ENCODE measurements at regions of chr11 and their contacts with region 1.

Region 1: DNA sequence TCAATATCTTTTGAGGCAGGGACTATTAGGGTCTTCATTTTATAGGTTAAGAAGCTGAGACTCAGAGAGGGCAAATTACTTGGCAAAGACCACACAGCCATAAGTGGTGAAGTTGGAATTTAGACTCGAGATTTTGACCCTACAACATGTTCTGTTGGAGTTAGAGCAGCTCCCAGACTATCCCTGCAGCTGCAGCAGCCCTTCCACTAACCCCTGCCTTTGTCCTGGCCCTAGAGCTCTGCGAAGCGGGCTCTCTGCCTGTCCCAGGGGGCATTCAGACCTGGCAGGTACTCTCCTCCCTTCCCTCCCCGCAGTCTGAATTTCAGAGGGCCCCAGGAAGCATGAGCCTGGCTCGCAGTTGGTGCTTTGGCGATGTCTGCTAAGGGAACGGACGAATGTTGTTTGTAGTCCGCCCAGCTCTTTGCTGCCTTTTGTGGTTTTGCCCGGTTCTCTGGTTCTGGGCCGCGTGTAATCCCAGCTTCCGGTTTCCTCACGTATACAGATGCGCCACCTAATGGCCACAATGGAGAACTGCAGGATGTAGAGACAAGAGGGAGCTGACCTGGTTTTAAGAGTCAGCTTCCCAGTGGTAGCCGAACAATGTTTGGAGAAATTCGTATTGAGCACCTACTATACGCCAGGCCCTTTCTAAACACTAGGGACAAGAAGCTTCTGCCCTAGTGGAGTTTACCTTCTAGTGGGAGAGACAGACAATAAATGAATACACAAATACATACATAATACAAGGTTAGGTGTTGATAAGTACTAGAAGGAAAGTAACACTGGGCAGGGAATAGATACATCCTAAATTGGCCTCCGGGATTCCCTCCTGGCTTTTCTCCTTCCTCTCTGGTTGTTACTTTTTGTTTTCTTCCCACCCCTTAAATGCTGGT is 125.2 kb downstream of the ST3GAL4 start:
- DNase-seq: peak; percentile 29 to 87 (median 69)
- ATAC-seq: peak; percentile 95
- H3K4me3 ChIP-seq: peak overlapping the region; percentile 36 to 44
- H3K4me3 Mint-ChIP-seq: peak overlapping the region; percentile 71
- H3K27ac ChIP-seq: peak overlapping the region in 1 of 2 experiments; percentile 49
- H3K27ac Mint-ChIP-seq: no peak overlapping the region
- H3K4me1 ChIP-seq: peaks cover 6% of the 10 kb centered on the region
- H3K4me1 Mint-ChIP-seq: peaks cover 18% of the 10 kb centered on the region
- H3K27me3 ChIP-seq: no peaks in the 10 kb centered on the region
- H3K27me3 Mint-ChIP-seq: no peaks in the 10 kb centered on the region
- CTCF ChIP-seq: peak; percentile 94

Region 2: DNA sequence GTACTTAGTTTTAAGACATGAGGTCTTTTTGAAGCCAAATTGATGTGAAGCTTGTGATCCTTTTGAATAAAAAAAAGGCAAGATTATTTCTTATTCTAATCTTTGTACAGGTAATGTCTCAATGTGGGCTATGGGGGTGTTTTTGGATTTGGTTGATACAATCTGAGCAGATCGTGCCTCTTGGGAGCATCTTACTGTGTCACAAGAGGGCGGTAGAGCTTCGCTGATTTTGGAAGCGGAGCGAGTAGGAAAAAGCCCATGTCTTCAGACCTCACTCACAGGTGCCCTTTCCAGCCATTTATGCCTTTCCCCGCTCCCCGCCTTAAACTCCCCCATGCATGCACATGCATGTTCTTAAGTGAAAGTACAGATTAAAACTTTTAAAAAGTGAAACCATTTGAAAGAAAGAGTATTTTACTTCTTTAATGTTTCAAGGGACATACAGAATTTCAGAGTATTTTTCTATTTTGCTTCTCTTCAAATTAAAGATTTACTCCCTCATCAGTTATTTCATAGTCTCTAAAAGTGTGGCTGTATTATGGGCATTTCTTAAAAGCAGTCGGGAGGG is 557.6 kb before region 1 on chr11:
- CTCF ChIA-PET with region 1: interaction called, 3 read pairs
- POLR2A ChIA-PET with region 1: no interaction called
- intact Hi-C with region 1: loop called (anchors 1 kb)
- DNase-seq: peak in 8 of 9 experiments; percentile 29 to 72 (median 55)
- ATAC-seq: peak; percentile 52
- H3K4me3 ChIP-seq: no peak overlapping the region
- H3K4me3 Mint-ChIP-seq: no peak overlapping the region
- H3K27ac ChIP-seq: no peak overlapping the region
- H3K27ac Mint-ChIP-seq: no peak overlapping the region
- H3K4me1 ChIP-seq: no peaks in the 10 kb centered on the region
- H3K4me1 Mint-ChIP-seq: no peaks in the 10 kb centered on the region
- H3K27me3 ChIP-seq: no peaks in the 10 kb centered on the region
- H3K27me3 Mint-ChIP-seq: peaks cover 32% of the 10 kb centered on the region
- CTCF ChIP-seq: peak; percentile 60

Region 3: DNA sequence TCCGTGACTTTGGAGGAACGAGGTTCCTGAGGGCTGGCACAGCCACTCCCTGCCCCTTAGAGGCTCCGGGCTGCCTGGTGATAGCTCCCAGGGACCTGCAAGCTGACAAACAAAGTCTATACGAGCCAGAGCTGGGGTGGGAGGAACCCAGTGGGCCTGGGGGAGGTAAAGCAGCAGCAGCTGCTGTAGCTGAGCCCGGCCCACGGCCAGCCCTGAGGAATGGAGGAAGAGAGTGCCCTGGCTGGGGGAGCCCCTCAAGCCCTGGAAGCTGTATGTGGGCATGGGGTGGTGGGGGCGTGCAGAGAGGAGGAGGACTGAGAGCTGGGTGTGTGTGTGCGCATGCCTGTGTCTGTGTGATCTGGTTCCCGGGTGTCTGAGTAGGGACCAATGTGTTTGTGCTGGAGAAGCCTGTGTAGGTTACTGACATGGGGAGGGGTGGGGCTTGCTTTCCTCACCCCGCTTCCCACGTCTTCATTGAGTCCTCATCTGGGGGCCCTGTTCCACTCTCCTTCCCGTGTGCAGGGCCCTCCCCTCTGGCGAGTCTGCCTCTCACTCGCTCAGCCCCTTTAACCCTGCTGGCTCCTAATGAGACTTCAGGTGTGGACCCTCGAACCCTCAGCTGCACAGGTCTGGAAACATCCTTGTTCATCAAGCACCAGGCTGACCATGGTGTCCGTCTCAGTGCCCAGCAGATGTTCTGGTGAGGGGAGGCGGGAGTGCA is 114.4 kb before region 1 on chr11:
- CTCF ChIA-PET with region 1: no interaction called
- POLR2A ChIA-PET with region 1: no interaction called
- intact Hi-C with region 1: no loop called
- DNase-seq: no peak
- ATAC-seq: no peak
- H3K4me3 ChIP-seq: no peak overlapping the region
- H3K4me3 Mint-ChIP-seq: no peak overlapping the region
- H3K27ac ChIP-seq: no peak overlapping the region
- H3K27ac Mint-ChIP-seq: no peak overlapping the region
- H3K4me1 ChIP-seq: no peaks in the 10 kb centered on the region
- H3K4me1 Mint-ChIP-seq: peaks cover 3% of the 10 kb centered on the region
- H3K27me3 ChIP-seq: no peaks in the 10 kb centered on the region
- H3K27me3 Mint-ChIP-seq: no peaks in the 10 kb centered on the region
- CTCF ChIP-seq: no peak

Region 4: GRCh38 chr11:126416542-126417090 is 64.0 kb before region 1 on chr11:
- CTCF ChIA-PET with region 1: interaction called, 13 read pairs
- POLR2A ChIA-PET with region 1: no interaction called
- intact Hi-C with region 1: loop called in 1 of 2 experiments (anchors 10 kb)
- DNase-seq: peak; percentile 20 to 82 (median 67)
- ATAC-seq: peak; percentile 98
- H3K4me3 ChIP-seq: peak overlapping the region; percentile 40 to 49
- H3K4me3 Mint-ChIP-seq: peak overlapping the region; percentile 71
- H3K27ac ChIP-seq: no peak overlapping the region
- H3K27ac Mint-ChIP-seq: no peak overlapping the region
- H3K4me1 ChIP-seq: peaks cover 7% of the 10 kb centered on the region
- H3K4me1 Mint-ChIP-seq: peaks cover 12% of the 10 kb centered on the region
- H3K27me3 ChIP-seq: no peaks in the 10 kb centered on the region
- H3K27me3 Mint-ChIP-seq: peaks cover 2% of the 10 kb centered on the region
- CTCF ChIP-seq: no peak

Region 5: GRCh38 chr11:126440792-126441514 is 39.7 kb before region 1 on chr11:
- CTCF ChIA-PET with region 1: interaction called, 149 read pairs
- POLR2A ChIA-PET with region 1: interaction called, 12 read pairs
- intact Hi-C with region 1: loop called (anchors 1 kb)
- DNase-seq: peak; percentile 48 to 83 (median 70)
- ATAC-seq: peak; percentile 70
- H3K4me3 ChIP-seq: no peak overlapping the region
- H3K4me3 Mint-ChIP-seq: no peak overlapping the region
- H3K27ac ChIP-seq: no peak overlapping the region
- H3K27ac Mint-ChIP-seq: no peak overlapping the region
- H3K4me1 ChIP-seq: peaks cover 5% of the 10 kb centered on the region
- H3K4me1 Mint-ChIP-seq: peaks cover 5% of the 10 kb centered on the region
- H3K27me3 ChIP-seq: no peaks in the 10 kb centered on the region
- H3K27me3 Mint-ChIP-seq: peaks cover 6% of the 10 kb centered on the region
- CTCF ChIP-seq: peak; percentile 96

Region 6: GRCh38 chr11:126465573-126466188 is 15.0 kb before region 1 on chr11:
- CTCF ChIA-PET with region 1: interaction called, 19 read pairs
- POLR2A ChIA-PET with region 1: interaction called, 9 read pairs
- intact Hi-C with region 1: no loop called
- DNase-seq: peak in 4 of 9 experiments; percentile 15 to 56 (median 41)
- ATAC-seq: peak; percentile 36
- H3K4me3 ChIP-seq: peak overlapping the region in 1 of 2 experiments; percentile 31
- H3K4me3 Mint-ChIP-seq: peak overlapping the region; percentile 26
- H3K27ac ChIP-seq: peak overlapping the region in 1 of 2 experiments; percentile 68
- H3K27ac Mint-ChIP-seq: peak overlapping the region; percentile 76
- H3K4me1 ChIP-seq: peaks cover 12% of the 10 kb centered on the region
- H3K4me1 Mint-ChIP-seq: peaks cover 16% of the 10 kb centered on the region
- H3K27me3 ChIP-seq: no peaks in the 10 kb centered on the region
- H3K27me3 Mint-ChIP-seq: peaks cover 2% of the 10 kb centered on the region
- CTCF ChIP-seq: no peak

Measured in CD8-positive, alpha-beta T cell (primary cell).